GM13977 (cell line): ENCODE measurements at regions of chr4 and their contacts with region 1.

Region 1: GRCh38 chr4:152735396-152735859 is 44.1 kb downstream of the TIGD4 start:
- DNase-seq: peak; percentile 48
- CTCF ChIP-seq: peak; percentile 67

Region 2: GRCh38 chr4:152640058-152640833 is 95.2 kb before region 1 on chr4:
- in situ Hi-C with region 1: loop called (anchors 10 kb)
- DNase-seq: no peak
- CTCF ChIP-seq: peak; percentile 45

Region 3: DNA sequence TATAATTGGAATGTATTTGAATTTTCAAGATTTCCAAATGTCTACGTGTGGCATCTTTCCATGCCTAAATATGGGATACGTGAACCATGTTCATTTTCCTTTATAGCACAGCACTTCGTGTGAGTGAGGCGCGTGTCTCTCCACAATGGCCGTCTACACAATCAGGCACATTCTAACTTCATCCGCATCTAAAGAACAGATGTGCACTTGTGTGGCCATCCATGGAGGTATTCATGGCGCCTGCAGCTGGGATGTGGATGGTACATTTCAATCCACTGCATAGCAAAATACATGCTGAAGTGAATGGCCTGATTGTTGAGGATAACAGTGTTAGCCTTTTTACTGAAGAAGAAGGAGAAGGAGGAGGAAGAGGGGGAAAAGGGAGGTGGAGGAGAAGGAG is 434.3 kb after region 1 on chr4:
- in situ Hi-C with region 1: no loop called
- DNase-seq: no peak
- CTCF ChIP-seq: no peak